ENCODE measurements at regions of chr10 and their contacts with region 1.

Region 1: DNA sequence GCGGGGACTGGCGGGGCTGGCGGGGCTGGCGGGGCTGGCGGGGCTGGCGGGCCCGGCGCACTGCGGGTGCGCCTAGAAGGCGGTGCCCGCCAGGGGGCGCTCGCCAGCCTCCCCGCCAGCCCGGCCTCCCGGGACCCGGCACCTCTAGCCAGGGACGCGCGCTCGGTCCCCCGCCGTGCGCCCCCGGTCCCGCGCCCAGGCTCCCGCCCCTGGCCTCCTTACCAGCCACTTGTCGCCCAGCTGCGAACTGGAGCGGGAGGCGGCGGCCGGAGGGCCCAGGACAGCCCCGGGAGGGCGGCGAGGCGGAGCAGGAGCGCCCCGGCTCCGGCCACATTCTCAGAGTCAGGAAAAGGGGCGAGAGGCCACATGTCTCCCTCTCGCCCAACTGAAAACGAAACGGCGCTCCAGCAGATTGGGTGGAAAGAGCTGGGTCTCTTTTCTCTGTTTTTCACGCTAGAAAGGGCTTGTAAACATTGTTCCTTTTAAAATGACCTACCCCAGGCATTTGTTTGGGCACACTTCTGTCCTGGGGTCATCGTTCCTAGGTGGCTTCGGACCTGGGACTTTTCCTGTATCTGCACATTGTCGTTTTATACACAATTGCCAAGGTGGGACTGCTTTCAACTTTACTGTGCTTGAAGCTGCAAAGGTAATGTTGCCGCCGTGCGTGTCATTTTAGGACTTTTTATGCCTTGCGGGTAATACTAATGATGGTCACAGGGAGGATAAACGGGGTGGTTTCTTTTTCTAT is 378 bp upstream of the PRKCQ start:
- DNase-seq: peak; percentile 74 to 95 (median 84)
- ATAC-seq: peak; percentile 92
- H3K4me3 ChIP-seq: peak overlapping the region; percentile 88
- H3K4me3 Mint-ChIP-seq: peak overlapping the region; percentile 86 to 99 (median 93)
- H3K27ac ChIP-seq: peak overlapping the region; percentile 94
- H3K27ac Mint-ChIP-seq: peak overlapping the region; percentile 94 to 99 (median 98)
- H3K4me1 ChIP-seq: peaks cover 33 to 42% of the 10 kb centered on the region in 2 donors
- H3K4me1 Mint-ChIP-seq: peaks cover 35 to 67% (median 56%) of the 10 kb centered on the region in 7 donors
- H3K27me3 ChIP-seq: no peaks in the 10 kb centered on the region
- H3K27me3 Mint-ChIP-seq: no peaks in the 10 kb centered on the region

Region 2: DNA sequence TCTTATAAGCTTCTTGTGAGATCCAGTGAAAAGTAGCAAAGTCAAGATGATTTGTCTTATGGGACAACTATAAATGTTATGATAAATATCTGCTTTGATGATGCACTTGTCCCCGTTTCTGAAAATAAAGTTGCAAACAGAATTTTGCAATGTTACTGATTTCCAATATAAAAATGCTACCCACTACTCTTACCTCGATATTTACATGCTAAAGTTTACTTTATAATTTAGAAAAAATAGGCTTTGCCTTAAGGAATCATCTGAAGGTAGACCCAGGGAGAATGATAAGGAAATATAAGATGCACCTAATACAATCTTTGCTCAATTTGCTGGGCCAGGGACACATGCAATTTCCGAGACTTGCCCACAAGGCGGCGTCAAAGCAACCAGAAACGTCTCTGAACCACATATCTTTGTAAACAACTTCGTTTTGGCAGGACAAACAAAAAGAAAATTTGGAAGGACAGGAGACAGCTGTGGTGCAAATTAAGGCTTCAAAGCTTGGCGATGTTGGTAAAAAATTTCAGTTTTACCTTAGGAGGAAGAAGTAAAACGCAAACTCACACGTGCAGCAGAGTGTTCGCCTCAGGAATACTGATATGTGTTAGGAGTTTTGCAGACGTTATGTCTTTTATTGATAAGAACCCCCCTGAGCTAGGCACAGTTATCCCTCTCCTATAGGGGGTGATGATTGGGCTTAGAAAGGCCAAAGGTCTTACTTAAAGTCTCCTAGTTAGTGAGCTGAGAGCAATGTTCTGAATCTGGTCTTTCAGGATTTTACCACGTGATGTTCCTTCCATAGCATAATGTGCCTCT is 134.7 kb before region 1 on chr10:
- CTCF ChIA-PET with region 1: interaction called, 3 read pairs
- POLR2A ChIA-PET with region 1: no interaction called
- intact Hi-C with region 1: loop called in 1 of 2 experiments (anchors 2 kb)
- DNase-seq: peak in 8 of 9 donors; percentile 28 to 49 (median 43)
- ATAC-seq: peak; percentile 64
- H3K4me3 ChIP-seq: no peak overlapping the region
- H3K4me3 Mint-ChIP-seq: peak overlapping the region in 5 of 10 donors; percentile 0 to 60 (median 30)
- H3K27ac ChIP-seq: peak overlapping the region; percentile 17
- H3K27ac Mint-ChIP-seq: peak overlapping the region; percentile 4 to 84 (median 66)
- H3K4me1 ChIP-seq: no peaks in the 10 kb centered on the region
- H3K4me1 Mint-ChIP-seq: peaks cover 10 to 49% (median 31%) of the 10 kb centered on the region in 7 donors
- H3K27me3 ChIP-seq: no peaks in the 10 kb centered on the region
- H3K27me3 Mint-ChIP-seq: no peaks in the 10 kb centered on the region

Region 3: GRCh38 chr10:6514844-6515780 is 65.3 kb before region 1 on chr10:
- CTCF ChIA-PET with region 1: interaction called, 5 read pairs
- POLR2A ChIA-PET with region 1: interaction called, 6 read pairs
- intact Hi-C with region 1: loop called in 1 of 2 experiments (anchors 1 kb)
- DNase-seq: no peak
- ATAC-seq: peak; percentile 74
- H3K4me3 ChIP-seq: no peak overlapping the region
- H3K4me3 Mint-ChIP-seq: peak overlapping the region in 1 of 10 donors; percentile 12
- H3K27ac ChIP-seq: no peak overlapping the region
- H3K27ac Mint-ChIP-seq: peak overlapping the region in 7 of 9 donors; percentile 17 to 83 (median 50)
- H3K4me1 ChIP-seq: peaks cover 35 to 48% of the 10 kb centered on the region in 2 donors
- H3K4me1 Mint-ChIP-seq: peaks cover 49 to 92% (median 80%) of the 10 kb centered on the region in 7 donors
- H3K27me3 ChIP-seq: no peaks in the 10 kb centered on the region
- H3K27me3 Mint-ChIP-seq: no peaks in the 10 kb centered on the region

Region 4: DNA sequence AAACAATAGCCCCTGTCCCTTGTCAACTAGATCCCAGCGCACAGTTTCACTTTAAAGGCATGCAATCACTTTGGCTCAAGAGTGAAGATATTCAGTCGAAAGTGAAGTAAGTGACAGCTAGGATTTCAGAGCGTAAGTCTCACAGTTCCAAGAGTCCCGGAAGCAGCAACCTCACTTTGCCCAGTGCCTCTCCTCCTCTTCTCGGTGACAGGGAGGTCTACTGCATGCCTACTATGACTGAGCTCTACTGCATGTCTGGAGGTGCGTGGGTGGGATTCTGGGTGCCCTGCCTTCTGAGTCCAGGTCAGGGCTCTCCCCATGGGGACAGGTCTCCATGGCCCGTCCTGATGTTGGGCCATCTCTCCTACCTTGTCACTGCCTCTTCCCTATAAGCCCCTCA is 17.4 kb before region 1 on chr10:
- CTCF ChIA-PET with region 1: interaction called, 4 read pairs
- POLR2A ChIA-PET with region 1: interaction called, 6 read pairs
- intact Hi-C with region 1: loop called (anchors 1 kb)
- DNase-seq: peak in 4 of 9 donors; percentile 33 to 60 (median 39)
- ATAC-seq: peak; percentile 56
- H3K4me3 ChIP-seq: peak overlapping the region; percentile 42
- H3K4me3 Mint-ChIP-seq: peak overlapping the region; percentile 69 to 89 (median 80)
- H3K27ac ChIP-seq: peak overlapping the region; percentile 46
- H3K27ac Mint-ChIP-seq: peak overlapping the region; percentile 47 to 94 (median 87)
- H3K4me1 ChIP-seq: peaks cover 69 to 73% of the 10 kb centered on the region in 2 donors
- H3K4me1 Mint-ChIP-seq: peaks cover 65 to 96% (median 91%) of the 10 kb centered on the region in 7 donors
- H3K27me3 ChIP-seq: no peaks in the 10 kb centered on the region
- H3K27me3 Mint-ChIP-seq: no peaks in the 10 kb centered on the region

Region 5: DNA sequence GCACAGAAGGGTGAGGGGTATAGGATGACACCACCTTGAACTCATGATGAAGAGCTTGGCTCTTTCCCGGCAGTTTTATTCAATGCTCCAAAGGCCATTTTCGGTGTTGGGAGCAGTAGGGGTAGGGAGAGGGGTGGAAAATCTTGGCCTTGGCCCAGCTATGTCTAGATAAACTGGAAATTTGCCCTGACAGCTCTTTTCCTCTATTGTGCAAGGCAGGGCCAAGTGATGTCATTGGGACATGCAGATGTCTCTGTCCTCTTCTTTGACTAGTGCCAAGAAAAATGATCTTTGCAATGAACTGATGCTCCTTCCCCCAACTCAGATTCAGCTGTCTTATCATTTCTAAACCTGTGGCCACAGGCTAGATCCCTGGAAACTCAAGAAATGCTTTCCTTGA is 27.3 kb after region 1 on chr10:
- CTCF ChIA-PET with region 1: interaction called, 206 read pairs
- POLR2A ChIA-PET with region 1: interaction called, 378 read pairs
- intact Hi-C with region 1: loop called (anchors 1 to 5 kb)
- DNase-seq: no peak
- ATAC-seq: no peak
- H3K4me3 ChIP-seq: no peak overlapping the region
- H3K4me3 Mint-ChIP-seq: peak overlapping the region in 6 of 10 donors; percentile 4 to 76 (median 62)
- H3K27ac ChIP-seq: peak overlapping the region; percentile 59
- H3K27ac Mint-ChIP-seq: peak overlapping the region; percentile 89 to 98 (median 95)
- H3K4me1 ChIP-seq: peaks cover 24 to 33% of the 10 kb centered on the region in 2 donors
- H3K4me1 Mint-ChIP-seq: peaks cover 28 to 85% (median 79%) of the 10 kb centered on the region in 7 donors
- H3K27me3 ChIP-seq: no peaks in the 10 kb centered on the region
- H3K27me3 Mint-ChIP-seq: no peaks in the 10 kb centered on the region

Measured in naive thymus-derived CD4-positive, alpha-beta T cell (primary cell).